ENCODE measurements at regions of chr4 and their contacts with region 1.

Region 1: GRCh38 chr4:102554482-102554881 is 53.3 kb downstream of the NFKB1 start:
- DNase-seq: no peak
- H3K4me3 ChIP-seq: no peak overlapping the region
- H3K27ac ChIP-seq: no peak overlapping the region
- H3K4me1 ChIP-seq: no peaks in the 10 kb centered on the region
- H3K27me3 ChIP-seq: no peaks in the 10 kb centered on the region
- CTCF ChIP-seq: no peak
- EP300 ChIP-seq: no peak
- POLR2A ChIP-seq: no peak
- RAD21 ChIP-seq: no peak

Region 2: DNA sequence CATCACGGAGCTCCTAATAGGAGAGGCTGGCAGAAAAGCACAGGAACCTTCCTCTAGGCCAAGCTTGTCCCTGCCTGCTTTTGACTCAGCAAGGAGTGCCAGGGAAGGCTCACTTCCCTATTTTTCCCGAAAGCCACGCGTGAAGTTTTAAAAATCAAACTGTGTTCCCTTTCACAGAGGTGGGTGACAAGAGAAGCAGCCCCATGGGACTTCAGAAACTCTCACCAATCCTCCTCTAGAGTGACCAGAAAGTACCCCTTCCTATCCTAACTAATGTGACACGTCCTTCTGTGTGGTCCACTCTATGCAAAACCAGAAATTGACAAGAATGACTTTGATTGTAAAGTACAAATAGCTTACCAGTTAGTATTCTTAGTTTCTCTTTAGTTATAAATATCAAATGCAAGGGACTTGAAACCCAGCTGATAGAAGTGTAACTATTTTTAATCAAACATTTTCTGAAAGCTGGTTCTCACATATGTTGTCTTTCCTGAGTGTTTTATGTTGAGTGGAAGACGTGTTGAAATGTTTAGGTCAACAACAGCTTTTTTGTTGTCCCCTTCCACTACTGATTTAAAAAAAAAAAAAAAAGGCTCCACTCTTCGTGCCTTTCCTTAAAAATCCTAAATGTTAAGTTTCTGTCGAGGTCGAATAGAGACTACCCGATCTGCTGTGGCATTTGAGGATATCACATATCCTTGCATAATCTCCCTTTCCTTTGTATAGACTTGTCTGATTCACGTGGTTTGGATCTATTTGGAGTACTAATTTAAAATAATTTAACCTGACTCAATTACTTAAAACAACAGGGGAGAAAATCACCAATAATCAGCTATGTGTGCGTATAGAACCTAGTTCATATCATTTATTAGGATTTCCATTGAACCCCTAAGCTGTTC is 11.2 kb before region 1 on chr4:
- CTCF ChIA-PET with region 1: interaction called, 22 read pairs
- POLR2A ChIA-PET with region 1: no interaction called
- DNase-seq: no peak
- H3K4me3 ChIP-seq: no peak overlapping the region
- H3K27ac ChIP-seq: no peak overlapping the region
- H3K4me1 ChIP-seq: no peaks in the 10 kb centered on the region
- H3K27me3 ChIP-seq: no peaks in the 10 kb centered on the region
- CTCF ChIP-seq: no peak
- EP300 ChIP-seq: no peak
- POLR2A ChIP-seq: no peak
- RAD21 ChIP-seq: no peak